Mammary epithelial cell (primary cell): ENCODE measurements at regions of chrX and their contacts with region 1.

Region 1: GRCh38 chrX:119488749-119489148 is 20.5 kb downstream of the SLC25A5 start:
- DNase-seq: no peak
- H3K4me3 ChIP-seq: no peak overlapping the region
- H3K27ac ChIP-seq: no peak overlapping the region
- H3K4me1 ChIP-seq: peaks cover 12% of the 10 kb centered on the region
- H3K27me3 ChIP-seq: no peaks in the 10 kb centered on the region
- CTCF ChIP-seq: peak; percentile 46 to 59

Region 2: DNA sequence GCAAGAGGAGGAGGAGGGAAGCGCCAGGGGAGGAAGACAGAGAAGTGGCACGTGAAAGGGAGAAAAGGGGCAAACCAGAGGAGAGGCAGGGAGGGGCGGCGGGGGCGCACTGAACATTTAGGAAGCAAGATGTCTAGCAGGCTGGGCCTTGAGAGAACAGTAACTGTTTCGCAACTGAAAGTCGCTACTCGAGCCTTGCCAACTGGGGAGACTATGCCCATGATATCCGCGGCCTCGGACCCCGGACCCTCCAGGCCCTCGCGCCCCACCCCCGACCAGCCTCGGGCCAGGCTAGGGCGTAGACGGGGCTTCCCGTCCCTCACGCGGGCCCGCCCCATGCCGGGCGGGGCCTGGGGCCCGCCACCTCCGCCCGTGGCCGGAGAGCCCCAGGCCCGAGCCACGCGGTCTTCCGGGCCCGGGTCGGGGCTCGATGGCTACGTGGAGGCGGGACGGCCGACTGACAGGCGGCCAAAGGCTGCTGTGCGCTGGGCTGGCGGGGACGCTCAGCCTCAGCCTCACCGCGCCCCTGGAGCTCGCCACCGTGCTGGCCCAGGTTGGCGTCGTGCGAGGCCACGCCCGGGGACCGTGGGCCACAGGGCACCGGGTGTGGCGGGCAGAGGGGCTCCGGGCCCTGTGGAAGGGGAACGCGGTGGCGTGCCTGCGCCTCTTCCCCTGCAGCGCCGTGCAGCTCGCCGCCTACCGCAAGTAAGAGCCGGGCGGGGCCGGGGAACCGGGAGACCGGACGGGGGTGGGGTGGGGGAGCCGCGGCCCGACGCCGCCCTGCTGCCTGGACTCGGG is 89.6 kb before region 1 on chrX and contains the start of gene SLC25A43:
- CTCF ChIA-PET with region 1: no interaction called
- dilution Hi-C with region 1: loop called (anchors 5 kb)
- in situ Hi-C with region 1: no loop called
- intact Hi-C with region 1: no loop called
- DNase-seq: peak; percentile 11
- H3K4me3 ChIP-seq: peak within 1 kb of the TSS; percentile 50 to 66 (median 56)
- H3K27ac ChIP-seq: peak within 1 kb of the TSS; percentile 33
- H3K4me1 ChIP-seq: peaks cover 10% of the 10 kb centered on the region
- H3K27me3 ChIP-seq: no peaks in the 10 kb centered on the region
- CTCF ChIP-seq: no peak
- total RNA-seq, gene SLC25A43: 18.9 to 20.7 TPM

Region 3: GRCh38 chrX:119455264-119455663 is 33.5 kb before region 1 on chrX:
- CTCF ChIA-PET with region 1: no interaction called
- dilution Hi-C with region 1: no loop called
- in situ Hi-C with region 1: no loop called
- intact Hi-C with region 1: no loop called
- DNase-seq: peak; percentile 35
- H3K4me3 ChIP-seq: no peak overlapping the region
- H3K27ac ChIP-seq: no peak overlapping the region
- H3K4me1 ChIP-seq: peaks cover 2% of the 10 kb centered on the region
- H3K27me3 ChIP-seq: no peaks in the 10 kb centered on the region
- CTCF ChIP-seq: no peak

Region 4: DNA sequence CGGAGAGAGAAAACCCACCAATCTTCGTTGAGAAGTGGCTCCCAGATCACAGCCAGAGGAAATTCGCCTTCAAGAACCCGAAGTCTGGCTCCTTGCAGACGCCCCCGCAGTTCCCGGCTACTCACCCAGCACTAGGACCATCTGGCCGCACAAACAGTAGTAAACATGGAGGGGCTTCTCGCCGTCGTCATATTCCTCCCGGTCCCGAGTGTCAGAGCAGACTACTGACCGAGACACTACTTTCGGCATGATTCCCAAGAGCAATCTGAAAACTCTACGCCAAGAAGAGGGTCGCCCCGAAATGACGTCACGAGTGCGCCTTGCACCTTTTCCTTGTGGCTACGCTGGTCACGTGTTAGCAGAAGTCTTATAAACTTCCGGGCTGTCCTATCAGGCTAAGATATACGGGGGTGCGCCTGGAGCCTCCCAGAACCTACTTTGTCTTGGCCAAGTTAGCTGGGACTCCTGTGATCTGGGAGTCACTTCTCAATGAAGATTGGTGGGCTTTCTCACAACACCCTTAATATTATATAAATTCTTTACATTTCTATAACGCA is 76.4 kb after region 1 on chrX and contains the start of gene STEEP1:
- CTCF ChIA-PET with region 1: no interaction called
- dilution Hi-C with region 1: loop called (anchors 5 kb)
- in situ Hi-C with region 1: no loop called
- intact Hi-C with region 1: no loop called
- DNase-seq: peak; percentile 83
- H3K4me3 ChIP-seq: peak within 1 kb of the TSS; percentile 50 to 65 (median 59)
- H3K27ac ChIP-seq: peak within 1 kb of the TSS; percentile 54
- H3K4me1 ChIP-seq: no peaks in the 10 kb centered on the region
- H3K27me3 ChIP-seq: no peaks in the 10 kb centered on the region
- CTCF ChIP-seq: no peak
- total RNA-seq, gene STEEP1: 20.9 to 27.3 TPM